ENCODE measurements at regions of chr16 and their contacts with region 1.

Region 1: DNA sequence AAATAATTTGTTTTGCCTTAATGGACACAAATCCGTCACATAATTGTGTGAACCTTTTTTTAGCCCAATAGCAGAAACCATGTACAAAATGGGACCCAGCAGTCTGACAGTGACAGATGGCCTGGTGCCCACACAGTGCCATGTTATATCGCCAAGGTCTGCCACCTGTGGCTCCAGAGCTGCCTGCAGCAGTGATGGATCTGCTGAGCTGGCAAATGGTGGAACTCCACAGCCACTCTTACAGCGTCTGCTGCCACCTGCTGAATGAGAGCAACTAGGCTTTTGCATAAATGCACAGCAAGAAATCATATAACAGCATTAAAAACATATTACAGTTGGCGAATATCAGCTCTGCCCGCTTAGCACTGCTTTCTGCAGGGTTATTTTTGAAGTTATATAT is 59.4 kb downstream of the NUP93 start:
- DNase-seq: no peak
- H3K4me3 ChIP-seq: no peak overlapping the region
- H3K27ac ChIP-seq: no peak overlapping the region
- H3K27me3 ChIP-seq: no peaks in the 10 kb centered on the region
- CTCF ChIP-seq: peak; percentile 56

Region 2: GRCh38 chr16:56801762-56802161 is 12.4 kb after region 1 on chr16:
- CTCF ChIA-PET with region 1: interaction called, 16 read pairs
- POLR2A ChIA-PET with region 1: no interaction called
- DNase-seq: no peak
- H3K4me3 ChIP-seq: no peak overlapping the region
- H3K27ac ChIP-seq: no peak overlapping the region
- H3K27me3 ChIP-seq: no peaks in the 10 kb centered on the region
- CTCF ChIP-seq: no peak

Region 3: DNA sequence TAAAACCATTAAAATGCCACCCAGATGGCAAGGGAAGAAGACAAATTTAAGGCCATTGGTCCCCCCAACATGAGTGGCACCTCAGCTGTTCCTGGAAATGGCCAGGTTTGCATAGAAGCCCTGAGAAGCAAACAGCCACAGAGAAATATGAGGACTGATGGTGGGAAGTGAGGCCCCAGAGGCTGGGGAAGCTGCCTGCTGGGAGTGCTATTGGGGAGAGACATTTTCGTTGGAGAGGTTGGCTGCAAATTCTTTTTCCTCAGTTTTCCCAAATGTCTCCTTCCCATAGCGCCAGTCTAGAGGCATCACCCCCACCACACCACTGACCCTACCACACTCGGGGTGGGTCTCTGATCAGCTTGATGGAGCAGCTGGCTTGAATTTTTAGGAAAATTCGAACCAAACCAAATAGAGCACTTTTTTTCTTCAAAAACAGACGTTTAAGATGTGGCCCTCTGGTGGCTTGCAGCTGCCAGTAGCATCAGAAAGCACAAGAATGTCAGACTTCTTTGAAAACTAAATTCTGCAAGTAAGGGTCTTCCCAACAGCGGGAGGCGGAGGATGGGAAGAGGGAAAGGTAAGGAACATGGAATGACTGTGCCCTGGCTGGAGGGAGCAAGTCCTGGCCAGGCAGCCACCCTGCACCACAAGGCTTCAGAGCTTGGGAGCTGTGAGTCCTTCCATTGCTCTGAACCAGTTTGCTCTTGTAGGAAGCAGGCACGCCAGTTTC is 62.5 kb after region 1 on chr16:
- CTCF ChIA-PET with region 1: interaction called, 75 read pairs
- POLR2A ChIA-PET with region 1: no interaction called
- DNase-seq: no peak
- H3K4me3 ChIP-seq: no peak overlapping the region
- H3K27ac ChIP-seq: no peak overlapping the region
- H3K27me3 ChIP-seq: no peaks in the 10 kb centered on the region
- CTCF ChIP-seq: peak; percentile 71

Region 4: DNA sequence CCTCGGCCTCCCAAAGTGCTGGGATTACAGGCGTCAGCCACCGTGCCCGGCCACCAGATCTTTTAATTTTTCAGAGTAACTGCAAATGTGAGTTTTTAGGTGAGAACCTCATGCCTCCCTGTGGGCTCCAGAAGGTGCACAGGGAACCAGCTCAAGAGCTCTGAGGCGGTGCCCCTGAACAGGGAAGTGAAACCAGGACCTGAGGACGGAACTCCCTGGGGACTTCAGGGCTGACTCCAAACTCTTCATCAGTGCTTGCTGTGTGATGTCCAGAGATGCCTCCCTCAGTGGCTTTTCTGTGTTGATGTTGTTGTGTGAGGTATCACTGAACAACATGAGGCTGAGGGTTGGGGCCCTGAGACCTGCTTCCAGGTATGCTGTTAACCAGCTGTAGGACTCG is 99.4 kb after region 1 on chr16:
- CTCF ChIA-PET with region 1: no interaction called
- POLR2A ChIA-PET with region 1: no interaction called
- DNase-seq: no peak
- H3K4me3 ChIP-seq: no peak overlapping the region
- H3K27ac ChIP-seq: no peak overlapping the region
- H3K27me3 ChIP-seq: peaks cover 6% of the 10 kb centered on the region
- CTCF ChIP-seq: no peak

Region 5: GRCh38 chr16:56950881-56951771 is 161.8 kb after region 1 on chr16:
- CTCF ChIA-PET with region 1: interaction called, 26 read pairs
- POLR2A ChIA-PET with region 1: interaction called, 4 read pairs
- DNase-seq: no peak
- H3K4me3 ChIP-seq: no peak overlapping the region
- H3K27ac ChIP-seq: no peak overlapping the region
- H3K27me3 ChIP-seq: no peaks in the 10 kb centered on the region
- CTCF ChIP-seq: peak; percentile 66

Region 6: DNA sequence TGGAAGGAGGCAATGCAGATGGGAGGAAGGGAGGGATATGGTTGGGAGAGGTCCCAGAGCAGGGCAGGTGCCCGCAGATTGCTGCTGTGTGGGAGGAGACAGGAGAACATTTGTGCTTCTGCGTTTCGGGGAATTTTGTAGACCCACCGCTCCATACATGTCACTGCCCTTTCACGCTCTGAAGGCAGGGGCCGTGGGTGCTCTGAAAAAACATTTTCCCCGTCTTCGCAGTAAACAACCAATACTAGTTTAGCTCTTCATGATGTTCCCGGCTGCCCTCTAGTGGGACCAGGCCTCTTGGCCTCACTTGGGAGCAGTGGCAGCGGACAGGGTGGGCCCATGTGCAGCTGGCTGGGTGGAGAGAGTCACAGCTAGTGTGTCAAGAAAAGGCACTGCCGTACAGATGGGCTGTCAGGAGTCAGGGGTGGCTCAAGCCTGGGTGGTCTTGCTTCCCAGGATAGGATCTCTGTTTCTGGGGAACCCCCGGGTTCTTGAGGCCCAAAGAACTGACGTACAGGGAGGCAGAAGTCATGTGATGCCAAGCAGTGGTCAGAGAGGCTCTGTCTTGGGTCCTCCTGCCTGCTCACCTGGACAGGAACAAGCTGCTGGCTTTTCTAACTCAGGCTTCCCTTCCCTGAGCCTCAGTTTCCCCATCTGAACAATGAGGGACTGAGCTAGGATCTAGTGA is 256.5 kb after region 1 on chr16:
- CTCF ChIA-PET with region 1: interaction called, 19 read pairs
- POLR2A ChIA-PET with region 1: no interaction called
- DNase-seq: peak; percentile 26
- H3K4me3 ChIP-seq: no peak overlapping the region
- H3K27ac ChIP-seq: no peak overlapping the region
- H3K27me3 ChIP-seq: no peaks in the 10 kb centered on the region
- CTCF ChIP-seq: peak; percentile 87

Region 7: GRCh38 chr16:57134982-57135381 is 345.6 kb after region 1 on chr16:
- CTCF ChIA-PET with region 1: no interaction called
- POLR2A ChIA-PET with region 1: no interaction called
- DNase-seq: no peak
- H3K4me3 ChIP-seq: no peak overlapping the region
- H3K27ac ChIP-seq: no peak overlapping the region
- H3K27me3 ChIP-seq: no peaks in the 10 kb centered on the region
- CTCF ChIP-seq: no peak

Measured in AG04450 (cell line).